Caco-2 (cell line): ENCODE measurements at regions of chr1 and their contacts with region 1.

Region 1: GRCh38 chr1:112803906-112804762 is 89.0 kb upstream of the PPM1J start:
- DNase-seq: peak; percentile 83 to 86
- H3K4me3 ChIP-seq: no peak overlapping the region
- H3K4me3 Mint-ChIP-seq: no peak overlapping the region
- H3K27ac Mint-ChIP-seq: peak overlapping the region; percentile 81
- H3K4me1 ChIP-seq: peaks cover 61% of the 10 kb centered on the region
- H3K4me1 Mint-ChIP-seq: peaks cover 30% of the 10 kb centered on the region
- H3K27me3 ChIP-seq: no peaks in the 10 kb centered on the region
- H3K27me3 Mint-ChIP-seq: no peaks in the 10 kb centered on the region
- CTCF ChIP-seq: peak; percentile 70 to 84

Region 2: DNA sequence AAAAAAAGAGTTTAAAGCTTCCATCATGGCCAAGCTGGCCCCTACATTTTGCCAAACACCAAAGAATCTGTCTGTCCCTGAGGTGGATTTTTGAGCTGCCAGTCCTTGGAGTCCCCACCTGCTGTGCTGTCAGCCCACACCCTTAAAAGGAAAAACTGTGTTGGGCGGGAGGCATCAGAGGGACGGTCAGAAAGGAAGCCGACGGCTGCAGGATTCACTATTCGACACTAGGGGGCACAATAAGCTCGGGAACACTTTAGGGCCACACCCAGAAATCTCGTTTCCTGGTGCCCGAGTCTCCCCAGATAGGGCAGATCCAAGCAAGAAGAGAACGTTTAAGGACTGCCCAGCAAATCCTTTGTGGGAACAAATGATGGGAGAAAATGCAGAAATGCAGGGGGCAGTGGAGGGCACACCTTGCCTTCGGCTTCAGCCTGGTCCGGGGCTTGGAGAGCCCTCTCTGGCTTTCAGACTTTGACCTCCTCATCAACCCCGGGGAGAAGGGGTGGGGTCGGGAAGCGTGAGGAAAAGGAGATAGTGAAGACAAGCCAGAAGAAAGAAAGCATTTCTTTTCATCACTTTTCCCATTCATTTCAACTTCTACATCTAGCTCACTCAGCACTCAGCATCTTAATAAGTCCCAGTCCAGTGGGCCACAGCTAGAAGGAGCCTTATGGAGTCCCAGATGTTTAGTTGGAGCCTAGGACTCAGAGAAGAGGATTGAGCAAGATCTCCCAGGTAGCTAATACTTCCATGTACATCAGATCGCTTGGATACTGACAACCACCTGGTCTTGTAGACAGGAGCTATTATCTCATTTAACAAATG is 413.1 kb before region 1 on chr1:
- CTCF ChIA-PET with region 1: no interaction called
- POLR2A ChIA-PET with region 1: no interaction called
- intact Hi-C with region 1: loop called (anchors 10 kb)
- DNase-seq: peak; percentile 85 to 86
- H3K4me3 ChIP-seq: peak overlapping the region; percentile 40
- H3K4me3 Mint-ChIP-seq: peak overlapping the region; percentile 92
- H3K27ac Mint-ChIP-seq: peak overlapping the region; percentile 73
- H3K4me1 ChIP-seq: peaks cover 13% of the 10 kb centered on the region
- H3K4me1 Mint-ChIP-seq: peaks cover 14% of the 10 kb centered on the region
- H3K27me3 ChIP-seq: no peaks in the 10 kb centered on the region
- H3K27me3 Mint-ChIP-seq: no peaks in the 10 kb centered on the region
- CTCF ChIP-seq: peak; percentile 57 to 72

Region 3: GRCh38 chr1:112715264-112716053 is 88.7 kb before region 1 on chr1 and contains the start of gene PPM1J:
- CTCF ChIA-PET with region 1: interaction called, 55 read pairs
- POLR2A ChIA-PET with region 1: no interaction called
- intact Hi-C with region 1: loop called (anchors 1 kb)
- DNase-seq: peak; percentile 96 to 97
- H3K4me3 ChIP-seq: peak within 1 kb of the TSS; percentile 50
- H3K4me3 Mint-ChIP-seq: peak within 1 kb of the TSS; percentile 87
- H3K27ac Mint-ChIP-seq: no peak within 1 kb of the TSS
- H3K4me1 ChIP-seq: peaks cover 8% of the 10 kb centered on the region; the same call in 1 of the 2 replicates
- H3K4me1 Mint-ChIP-seq: peaks cover 11% of the 10 kb centered on the region
- H3K27me3 ChIP-seq: no peaks in the 10 kb centered on the region
- H3K27me3 Mint-ChIP-seq: no peaks in the 10 kb centered on the region
- CTCF ChIP-seq: no peak
- total RNA-seq, gene PPM1J: 1.1 and 1.5 TPM in 2 replicates

Region 4: GRCh38 chr1:112727716-112728115 is 76.4 kb before region 1 on chr1:
- CTCF ChIA-PET with region 1: interaction called, 5 read pairs
- POLR2A ChIA-PET with region 1: no interaction called
- intact Hi-C with region 1: loop called (anchors 2 kb)
- DNase-seq: peak in 1 of 2 experiments; percentile 33
- H3K4me3 ChIP-seq: no peak overlapping the region
- H3K4me3 Mint-ChIP-seq: no peak overlapping the region
- H3K27ac Mint-ChIP-seq: no peak overlapping the region
- H3K4me1 ChIP-seq: peaks cover 7% of the 10 kb centered on the region
- H3K4me1 Mint-ChIP-seq: peaks cover 17% of the 10 kb centered on the region
- H3K27me3 ChIP-seq: no peaks in the 10 kb centered on the region
- H3K27me3 Mint-ChIP-seq: no peaks in the 10 kb centered on the region
- CTCF ChIP-seq: no peak

Region 5: GRCh38 chr1:112735752-112736151 is 68.4 kb before region 1 on chr1:
- CTCF ChIA-PET with region 1: interaction called, 5 read pairs
- POLR2A ChIA-PET with region 1: no interaction called
- intact Hi-C with region 1: loop called (anchors 1 kb)
- DNase-seq: no peak
- H3K4me3 ChIP-seq: no peak overlapping the region
- H3K4me3 Mint-ChIP-seq: no peak overlapping the region
- H3K27ac Mint-ChIP-seq: no peak overlapping the region
- H3K4me1 ChIP-seq: no peaks in the 10 kb centered on the region
- H3K4me1 Mint-ChIP-seq: no peaks in the 10 kb centered on the region
- H3K27me3 ChIP-seq: no peaks in the 10 kb centered on the region
- H3K27me3 Mint-ChIP-seq: no peaks in the 10 kb centered on the region
- CTCF ChIP-seq: no peak

Region 6: GRCh38 chr1:112762541-112763517 is 41.3 kb before region 1 on chr1:
- CTCF ChIA-PET with region 1: interaction called, 7 read pairs
- POLR2A ChIA-PET with region 1: no interaction called
- intact Hi-C with region 1: loop called (anchors 1 kb)
- DNase-seq: no peak
- H3K4me3 ChIP-seq: no peak overlapping the region
- H3K4me3 Mint-ChIP-seq: no peak overlapping the region
- H3K27ac Mint-ChIP-seq: peak overlapping the region; percentile 70
- H3K4me1 ChIP-seq: peaks cover 21% of the 10 kb centered on the region
- H3K4me1 Mint-ChIP-seq: peaks cover 21% of the 10 kb centered on the region
- H3K27me3 ChIP-seq: no peaks in the 10 kb centered on the region
- H3K27me3 Mint-ChIP-seq: no peaks in the 10 kb centered on the region
- CTCF ChIP-seq: no peak

Region 7: DNA sequence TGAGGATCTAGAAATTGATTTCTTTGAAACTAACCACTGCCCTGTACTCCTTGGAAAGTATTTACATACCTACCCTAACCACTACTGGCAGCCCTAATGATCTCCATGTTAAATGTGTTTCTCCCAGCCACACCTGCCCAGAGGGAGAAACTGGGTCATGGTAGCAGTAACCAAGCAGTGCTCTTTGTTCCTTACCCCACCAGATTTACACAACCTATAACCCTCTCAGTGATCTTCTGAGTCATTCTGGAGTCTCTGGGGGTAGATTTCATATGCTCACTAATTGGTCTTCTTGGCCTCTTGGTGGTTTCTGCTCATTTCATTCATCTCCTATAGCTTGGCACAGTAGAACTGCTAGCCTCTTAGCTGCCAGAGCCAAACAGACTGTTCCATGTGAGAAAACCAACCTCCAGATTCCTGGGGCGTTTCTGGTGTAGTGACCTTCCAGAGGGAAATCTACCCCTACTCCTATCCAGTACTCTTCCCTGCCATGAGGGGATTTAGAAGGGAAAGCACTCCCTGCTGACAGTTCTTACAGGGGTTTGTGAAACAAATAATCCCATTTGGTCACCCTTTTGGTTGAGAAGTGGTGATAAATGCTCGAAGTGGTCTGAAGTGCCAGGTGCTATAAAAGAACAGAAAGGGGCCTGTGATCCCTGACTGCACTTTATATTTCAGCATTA is 232.6 kb after region 1 on chr1:
- CTCF ChIA-PET with region 1: no interaction called
- POLR2A ChIA-PET with region 1: no interaction called
- intact Hi-C with region 1: no loop called
- DNase-seq: no peak
- H3K4me3 ChIP-seq: no peak overlapping the region
- H3K4me3 Mint-ChIP-seq: no peak overlapping the region
- H3K27ac Mint-ChIP-seq: no peak overlapping the region
- H3K4me1 ChIP-seq: peaks cover 28% of the 10 kb centered on the region
- H3K4me1 Mint-ChIP-seq: peaks cover 16% of the 10 kb centered on the region
- H3K27me3 ChIP-seq: no peaks in the 10 kb centered on the region
- H3K27me3 Mint-ChIP-seq: no peaks in the 10 kb centered on the region
- CTCF ChIP-seq: no peak

Region 8: DNA sequence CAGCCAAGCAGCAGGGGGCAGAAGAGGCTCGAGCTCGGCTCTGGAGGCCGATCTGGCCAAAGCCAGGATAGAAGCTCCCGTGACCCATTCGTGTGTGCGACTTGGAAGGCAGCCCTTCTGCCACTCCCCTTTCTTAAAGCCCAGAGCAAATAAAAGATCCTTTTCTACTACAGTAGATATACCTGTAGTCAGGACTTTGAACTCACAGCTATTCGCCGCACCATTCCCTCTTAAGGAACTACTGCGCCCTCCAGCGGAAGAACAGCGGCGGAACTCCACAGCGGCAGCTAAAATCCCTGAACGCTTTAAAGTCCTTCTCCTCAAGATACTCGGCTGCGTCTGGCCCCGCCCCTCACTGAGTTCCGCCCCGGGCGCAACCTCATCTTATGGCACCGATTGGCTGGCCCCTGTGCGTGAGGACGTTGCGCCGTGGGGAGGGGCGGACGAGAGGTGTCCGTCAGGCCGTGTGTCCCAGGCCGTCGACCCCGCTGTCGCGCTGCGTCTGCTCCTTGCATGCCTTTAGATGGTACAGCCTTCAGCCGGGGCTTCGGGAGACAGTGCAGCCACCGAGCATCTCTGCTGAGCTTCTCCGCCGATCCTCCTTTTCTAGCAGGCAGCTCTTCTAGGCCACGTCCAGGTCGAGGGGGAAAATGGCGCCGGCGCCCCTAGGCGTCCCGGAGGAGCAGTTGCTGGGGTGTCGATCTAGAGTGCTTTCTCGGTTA is 268.8 kb after region 1 on chr1 and contains the start of gene LRIG2:
- CTCF ChIA-PET with region 1: interaction called, 13 read pairs
- POLR2A ChIA-PET with region 1: interaction called, 3 read pairs
- intact Hi-C with region 1: loop called (anchors 2 kb)
- DNase-seq: peak; percentile 96 to 98
- H3K4me3 ChIP-seq: peak within 1 kb of the TSS; percentile 92
- H3K4me3 Mint-ChIP-seq: peak within 1 kb of the TSS; percentile 85
- H3K27ac Mint-ChIP-seq: peak within 1 kb of the TSS; percentile 80
- H3K4me1 ChIP-seq: peaks cover 5% of the 10 kb centered on the region
- H3K4me1 Mint-ChIP-seq: no peaks in the 10 kb centered on the region
- H3K27me3 ChIP-seq: no peaks in the 10 kb centered on the region
- H3K27me3 Mint-ChIP-seq: no peaks in the 10 kb centered on the region
- CTCF ChIP-seq: peak; percentile 45 to 56
- total RNA-seq, gene LRIG2: 10.7 and 14.4 TPM in 2 replicates